GM12878 (cell line): ENCODE measurements at regions of chr12 and their contacts with region 1.

Region 1: GRCh38 chr12:2812290-2813213 is at the start of gene ITFG2:
- DNase-seq: peak; percentile 93
- ATAC-seq: peak; percentile 97
- H3K4me3 ChIP-seq: peak within 1 kb of the TSS; percentile 89
- H3K27ac ChIP-seq: peak within 1 kb of the TSS; percentile 84
- H3K4me1 ChIP-seq: no peaks in the 10 kb centered on the region
- H3K27me3 ChIP-seq: no peaks in the 10 kb centered on the region
- CTCF ChIP-seq: no peak
- EP300 ChIP-seq: 0 out of 4 replicates have a peak, but pooled peaks of 1 of the 2 experiments have one; percentile 19
- POLR2A ChIP-seq: peak; percentile 99
- RAD21 ChIP-seq: no peak
- polyA plus RNA-seq, gene ITFG2: 23.1 to 28.5 TPM

Region 2: GRCh38 chr12:2783936-2784600 is 28.5 kb before region 1 on chr12:
- CTCF ChIA-PET with region 1: interaction called, 16 read pairs
- POLR2A ChIA-PET with region 1: interaction called, 3 read pairs
- RAD21 ChIA-PET with region 1: interaction called, 4 read pairs
- SMC1A ChIA-PET with region 1: interaction called, 6 read pairs
- in situ Hi-C with region 1: no loop called
- intact Hi-C with region 1: no loop called
- DNase-seq: no peak
- ATAC-seq: peak; percentile 96
- H3K4me3 ChIP-seq: no peak overlapping the region
- H3K27ac ChIP-seq: no peak overlapping the region
- H3K4me1 ChIP-seq: no peaks in the 10 kb centered on the region; the same call in 1 of the 2 replicates
- H3K27me3 ChIP-seq: peaks cover 1 to 6% of the 10 kb centered on the region in 2 experiments; a peak in 3 of 4 replicates
- CTCF ChIP-seq: peak; percentile 80 to 92 (median 92)
- EP300 ChIP-seq: no peak
- POLR2A ChIP-seq: no peak
- RAD21 ChIP-seq: peak; percentile 62

Region 3: GRCh38 chr12:2794736-2795289 is 17.7 kb before region 1 on chr12 and contains the start of gene FKBP4:
- CTCF ChIA-PET with region 1: interaction called, 25 read pairs
- POLR2A ChIA-PET with region 1: interaction called, 12 read pairs
- RAD21 ChIA-PET with region 1: interaction called, 13 read pairs
- SMC1A ChIA-PET with region 1: interaction called, 10 read pairs
- in situ Hi-C with region 1: no loop called
- intact Hi-C with region 1: loop called (anchors 1 kb)
- DNase-seq: no peak
- ATAC-seq: peak; percentile 92
- H3K4me3 ChIP-seq: peak within 1 kb of the TSS; percentile 90
- H3K27ac ChIP-seq: peak within 1 kb of the TSS; percentile 58
- H3K4me1 ChIP-seq: no peaks in the 10 kb centered on the region; the same call in 1 of the 2 replicates
- H3K27me3 ChIP-seq: peaks cover 0 to 3% of the 10 kb centered on the region in 2 experiments; a peak in 1 of 4 replicates
- CTCF ChIP-seq: no peak
- EP300 ChIP-seq: no peak
- POLR2A ChIP-seq: peak; percentile 89
- RAD21 ChIP-seq: no peak
- polyA plus RNA-seq, gene FKBP4: 8.9 to 15.4 TPM

Region 4: DNA sequence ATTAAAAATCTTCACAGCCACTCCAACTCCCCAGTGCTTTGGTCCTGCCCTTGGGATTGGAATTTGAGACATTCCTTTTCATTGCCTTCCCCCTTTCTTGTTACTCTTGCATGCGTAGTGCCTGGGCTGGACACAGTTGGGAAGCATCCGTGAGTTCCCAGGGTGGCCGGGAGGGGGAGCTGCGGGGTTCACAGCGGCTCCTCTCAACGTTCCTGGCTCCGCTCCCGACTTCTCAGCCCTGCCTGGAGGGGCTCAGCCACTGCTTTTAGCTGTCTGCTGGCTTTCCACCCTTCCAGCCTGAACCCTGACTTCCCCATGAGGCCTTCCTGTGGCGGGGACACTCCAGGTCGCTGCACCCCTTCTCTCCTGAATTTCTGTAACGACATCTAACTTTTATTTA is 41.1 kb after region 1 on chr12:
- CTCF ChIA-PET with region 1: no interaction called
- POLR2A ChIA-PET with region 1: no interaction called
- RAD21 ChIA-PET with region 1: no interaction called
- SMC1A ChIA-PET with region 1: no interaction called
- in situ Hi-C with region 1: no loop called
- intact Hi-C with region 1: no loop called
- DNase-seq: no peak
- ATAC-seq: peak; percentile 90
- H3K4me3 ChIP-seq: no peak overlapping the region
- H3K27ac ChIP-seq: no peak overlapping the region
- H3K4me1 ChIP-seq: no peaks in the 10 kb centered on the region
- H3K27me3 ChIP-seq: no peaks in the 10 kb centered on the region
- CTCF ChIP-seq: peak; percentile 54 to 85 (median 68)
- EP300 ChIP-seq: no peak
- POLR2A ChIP-seq: no peak
- RAD21 ChIP-seq: peak; percentile 43

Region 5: GRCh38 chr12:2877047-2877952 is 64.7 kb after region 1 on chr12 and contains the starts of genes FOXM1 and RHNO1:
- CTCF ChIA-PET with region 1: interaction called, 4 read pairs
- POLR2A ChIA-PET with region 1: interaction called, 3 read pairs
- RAD21 ChIA-PET with region 1: no interaction called
- SMC1A ChIA-PET with region 1: interaction called, 3 read pairs
- in situ Hi-C with region 1: no loop called
- intact Hi-C with region 1: loop called (anchors 2 kb)
- DNase-seq: no peak
- ATAC-seq: peak; percentile 86
- H3K4me3 ChIP-seq: peak within 1 kb of the TSS; percentile 93
- H3K27ac ChIP-seq: peak within 1 kb of the TSS; percentile 98
- H3K4me1 ChIP-seq: peaks cover 11% of the 10 kb centered on the region
- H3K27me3 ChIP-seq: no peaks in the 10 kb centered on the region
- CTCF ChIP-seq: peak in 1 of 3 experiments; percentile 2; a peak in 1 of 6 replicates
- EP300 ChIP-seq: no peak
- POLR2A ChIP-seq: peak; percentile 92
- RAD21 ChIP-seq: no peak
- polyA plus RNA-seq, gene FOXM1: 15.1 to 15.5 TPM
- polyA plus RNA-seq, gene RHNO1: 27.9 to 29.1 TPM

Region 6: DNA sequence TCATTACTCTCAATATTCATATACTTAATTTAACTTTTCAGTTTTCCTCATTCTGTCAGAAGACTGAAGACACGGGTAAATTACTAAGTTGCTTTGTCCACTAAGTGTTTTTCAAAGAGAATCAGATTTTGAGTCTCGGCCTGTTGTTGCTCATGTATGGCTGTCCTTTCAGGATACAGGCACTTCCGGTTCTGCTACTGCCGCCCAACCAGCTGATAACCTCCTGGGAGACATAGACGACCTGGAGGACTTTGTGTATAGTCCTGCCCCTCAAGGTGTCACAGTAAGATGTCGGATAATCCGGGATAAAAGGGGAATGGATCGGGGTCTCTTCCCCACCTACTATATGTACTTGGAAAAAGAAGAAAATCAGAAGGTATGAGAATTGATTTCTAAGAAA is 118.3 kb after region 1 on chr12:
- CTCF ChIA-PET with region 1: no interaction called
- POLR2A ChIA-PET with region 1: no interaction called
- RAD21 ChIA-PET with region 1: no interaction called
- SMC1A ChIA-PET with region 1: no interaction called
- in situ Hi-C with region 1: no loop called
- intact Hi-C with region 1: no loop called
- DNase-seq: no peak
- ATAC-seq: no peak
- H3K4me3 ChIP-seq: no peak overlapping the region
- H3K27ac ChIP-seq: no peak overlapping the region
- H3K4me1 ChIP-seq: no peaks in the 10 kb centered on the region
- H3K27me3 ChIP-seq: no peaks in the 10 kb centered on the region
- CTCF ChIP-seq: no peak
- EP300 ChIP-seq: no peak
- POLR2A ChIP-seq: no peak
- RAD21 ChIP-seq: no peak